Mammary epithelial cell (primary cell): ENCODE measurements at regions of chr2 and their contacts with region 1.

Region 1: DNA sequence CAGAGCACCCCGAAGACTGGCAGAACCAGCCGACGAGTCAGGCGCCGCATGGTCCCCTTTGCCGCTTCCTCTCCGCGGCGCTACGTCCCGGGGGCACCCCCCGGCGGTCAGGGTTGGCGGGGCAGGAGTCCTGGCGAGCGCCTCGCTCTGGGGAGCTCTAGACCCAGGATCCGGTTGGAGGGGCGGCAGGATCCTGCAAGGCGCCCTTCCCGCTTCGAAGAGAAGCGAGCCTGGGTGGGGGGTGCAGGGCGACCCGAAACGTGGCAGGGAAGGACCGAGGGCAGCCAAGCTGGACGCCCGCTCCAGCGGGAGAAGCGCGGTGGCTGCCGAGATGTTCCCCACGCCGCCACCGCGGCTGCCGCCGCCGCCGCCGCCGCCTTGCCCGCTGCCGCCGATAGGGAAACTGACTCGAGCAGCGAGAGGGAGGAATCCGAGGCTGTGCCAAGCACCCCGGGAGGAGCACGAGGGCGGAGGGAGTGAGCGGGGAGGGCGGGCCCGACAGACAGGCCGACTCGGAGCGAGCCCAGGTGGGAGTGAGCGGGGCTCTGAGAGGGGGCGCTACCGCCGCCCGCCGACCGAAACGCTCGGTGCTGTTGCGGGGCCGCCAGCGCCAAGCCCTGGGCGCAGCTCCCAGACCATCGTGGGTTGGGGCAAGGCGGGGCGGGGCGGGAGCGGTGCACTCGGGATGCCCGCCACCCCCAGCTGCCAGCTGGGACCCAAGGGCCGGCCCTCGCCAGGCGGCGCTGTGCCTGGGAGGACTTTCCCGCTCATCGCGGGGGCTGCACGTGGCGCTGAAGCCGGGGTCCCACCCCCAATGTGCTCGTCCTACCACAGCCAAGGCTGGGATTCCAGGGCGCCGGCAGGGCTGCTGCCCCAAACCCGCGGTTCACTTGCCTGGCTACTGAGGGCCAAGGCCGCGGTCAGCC is at the start of gene GALNT14:
- DNase-seq: peak; percentile 82
- H3K4me3 ChIP-seq: peak within 1 kb of the TSS; percentile 71 to 88 (median 80)
- H3K27ac ChIP-seq: peak within 1 kb of the TSS; percentile 59
- H3K4me1 ChIP-seq: no peaks in the 10 kb centered on the region
- H3K27me3 ChIP-seq: no peaks in the 10 kb centered on the region
- CTCF ChIP-seq: peak; percentile 52 to 72
- total RNA-seq, gene GALNT14: 12.7 to 29.9 TPM

Region 2: GRCh38 chr2:30747211-30747610 is 391.1 kb before region 1 on chr2:
- CTCF ChIA-PET with region 1: interaction called, 22 read pairs
- dilution Hi-C with region 1: no loop called
- in situ Hi-C with region 1: no loop called
- intact Hi-C with region 1: no loop called
- DNase-seq: no peak
- H3K4me3 ChIP-seq: no peak overlapping the region
- H3K27ac ChIP-seq: no peak overlapping the region
- H3K4me1 ChIP-seq: no peaks in the 10 kb centered on the region
- H3K27me3 ChIP-seq: no peaks in the 10 kb centered on the region
- CTCF ChIP-seq: no peak

Region 3: GRCh38 chr2:30862054-30862651 is 276.1 kb before region 1 on chr2:
- CTCF ChIA-PET with region 1: interaction called, 3 read pairs
- dilution Hi-C with region 1: no loop called
- in situ Hi-C with region 1: loop called in 1 of 2 experiments (anchors 25 kb)
- intact Hi-C with region 1: loop called (anchors 1 kb)
- DNase-seq: peak; percentile 61
- H3K4me3 ChIP-seq: no peak overlapping the region
- H3K27ac ChIP-seq: no peak overlapping the region
- H3K4me1 ChIP-seq: no peaks in the 10 kb centered on the region
- H3K27me3 ChIP-seq: no peaks in the 10 kb centered on the region
- CTCF ChIP-seq: peak; percentile 84 to 89

Region 4: DNA sequence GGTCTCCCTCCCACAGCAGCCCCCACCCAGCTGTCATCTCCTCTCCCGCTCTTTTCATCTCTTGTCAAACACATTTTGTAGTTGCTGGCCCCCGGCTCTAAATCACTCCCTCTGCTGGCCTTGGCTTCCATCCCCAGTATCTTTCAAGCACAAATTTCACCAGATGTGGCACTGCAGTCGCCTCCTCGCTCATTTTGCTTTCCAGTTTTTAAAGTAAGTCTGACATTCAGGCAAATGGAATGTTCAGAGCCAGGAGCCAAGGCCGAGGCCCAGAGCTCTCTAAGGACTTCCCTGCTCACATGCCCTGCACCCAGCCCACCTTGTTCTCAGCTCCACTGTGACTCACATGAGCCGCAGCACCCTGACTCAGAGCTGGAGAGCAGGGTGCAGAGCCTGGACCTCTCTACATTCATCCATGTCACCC is 158.5 kb before region 1 on chr2:
- CTCF ChIA-PET with region 1: interaction called, 8 read pairs
- dilution Hi-C with region 1: no loop called
- in situ Hi-C with region 1: no loop called
- intact Hi-C with region 1: loop called (anchors 1 kb)
- DNase-seq: peak; percentile 97
- H3K4me3 ChIP-seq: no peak overlapping the region
- H3K27ac ChIP-seq: peak overlapping the region; percentile 2
- H3K4me1 ChIP-seq: peaks cover 17% of the 10 kb centered on the region
- H3K27me3 ChIP-seq: no peaks in the 10 kb centered on the region
- CTCF ChIP-seq: peak; percentile 50 to 71

Region 5: GRCh38 chr2:31176742-31177141 is 38.4 kb after region 1 on chr2:
- CTCF ChIA-PET with region 1: no interaction called
- dilution Hi-C with region 1: no loop called
- in situ Hi-C with region 1: no loop called
- intact Hi-C with region 1: no loop called
- DNase-seq: no peak
- H3K4me3 ChIP-seq: no peak overlapping the region
- H3K27ac ChIP-seq: no peak overlapping the region
- H3K4me1 ChIP-seq: no peaks in the 10 kb centered on the region
- H3K27me3 ChIP-seq: no peaks in the 10 kb centered on the region
- CTCF ChIP-seq: no peak

Region 6: DNA sequence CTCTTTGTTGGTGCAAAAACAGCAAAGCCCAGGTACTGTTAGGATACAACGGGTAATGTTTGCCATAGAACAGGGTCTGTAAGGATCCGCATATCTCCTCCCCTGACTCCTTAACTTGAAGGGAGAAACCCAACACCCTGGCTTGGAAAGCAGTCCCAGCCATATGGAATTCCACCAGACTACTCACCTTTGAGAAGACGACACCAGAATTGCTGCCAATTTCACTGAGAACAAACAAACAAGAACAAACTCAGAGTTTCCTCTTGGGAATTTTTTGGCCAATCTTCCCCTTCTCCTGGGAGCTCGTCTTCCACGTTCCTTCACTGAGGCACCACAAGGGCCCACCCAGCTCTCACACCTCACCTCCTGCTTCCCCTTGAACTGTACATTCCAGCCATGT is 49.8 kb after region 1 on chr2:
- CTCF ChIA-PET with region 1: no interaction called
- dilution Hi-C with region 1: no loop called
- in situ Hi-C with region 1: no loop called
- intact Hi-C with region 1: no loop called
- DNase-seq: no peak
- H3K4me3 ChIP-seq: no peak overlapping the region
- H3K27ac ChIP-seq: no peak overlapping the region
- H3K4me1 ChIP-seq: no peaks in the 10 kb centered on the region
- H3K27me3 ChIP-seq: peaks cover 2% of the 10 kb centered on the region
- CTCF ChIP-seq: no peak

Region 7: DNA sequence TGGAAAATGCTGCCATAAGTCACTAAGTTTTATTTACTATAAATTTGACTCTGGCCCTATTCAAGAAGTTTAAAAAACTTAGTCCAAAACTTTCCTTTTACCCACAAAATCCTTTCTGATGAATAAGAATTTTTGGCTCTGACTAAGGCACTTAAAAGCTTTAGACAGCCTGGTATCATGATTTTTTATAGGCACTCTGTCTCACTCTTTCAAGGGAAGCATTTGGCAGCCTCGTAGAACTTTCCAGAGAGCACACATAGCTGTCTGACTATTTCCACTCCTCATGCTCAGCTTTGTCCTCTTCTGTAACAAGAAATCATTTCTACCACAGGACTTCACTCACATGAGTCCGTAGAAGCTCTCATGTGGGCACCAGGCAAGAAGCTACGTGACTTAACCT is 308.5 kb after region 1 on chr2:
- CTCF ChIA-PET with region 1: no interaction called
- dilution Hi-C with region 1: no loop called
- in situ Hi-C with region 1: no loop called
- intact Hi-C with region 1: no loop called
- DNase-seq: no peak
- H3K4me3 ChIP-seq: no peak overlapping the region
- H3K27ac ChIP-seq: no peak overlapping the region
- H3K4me1 ChIP-seq: no peaks in the 10 kb centered on the region
- H3K27me3 ChIP-seq: no peaks in the 10 kb centered on the region
- CTCF ChIP-seq: no peak